ENCODE measurements at regions of chr14 and their contacts with region 1.

Region 1: DNA sequence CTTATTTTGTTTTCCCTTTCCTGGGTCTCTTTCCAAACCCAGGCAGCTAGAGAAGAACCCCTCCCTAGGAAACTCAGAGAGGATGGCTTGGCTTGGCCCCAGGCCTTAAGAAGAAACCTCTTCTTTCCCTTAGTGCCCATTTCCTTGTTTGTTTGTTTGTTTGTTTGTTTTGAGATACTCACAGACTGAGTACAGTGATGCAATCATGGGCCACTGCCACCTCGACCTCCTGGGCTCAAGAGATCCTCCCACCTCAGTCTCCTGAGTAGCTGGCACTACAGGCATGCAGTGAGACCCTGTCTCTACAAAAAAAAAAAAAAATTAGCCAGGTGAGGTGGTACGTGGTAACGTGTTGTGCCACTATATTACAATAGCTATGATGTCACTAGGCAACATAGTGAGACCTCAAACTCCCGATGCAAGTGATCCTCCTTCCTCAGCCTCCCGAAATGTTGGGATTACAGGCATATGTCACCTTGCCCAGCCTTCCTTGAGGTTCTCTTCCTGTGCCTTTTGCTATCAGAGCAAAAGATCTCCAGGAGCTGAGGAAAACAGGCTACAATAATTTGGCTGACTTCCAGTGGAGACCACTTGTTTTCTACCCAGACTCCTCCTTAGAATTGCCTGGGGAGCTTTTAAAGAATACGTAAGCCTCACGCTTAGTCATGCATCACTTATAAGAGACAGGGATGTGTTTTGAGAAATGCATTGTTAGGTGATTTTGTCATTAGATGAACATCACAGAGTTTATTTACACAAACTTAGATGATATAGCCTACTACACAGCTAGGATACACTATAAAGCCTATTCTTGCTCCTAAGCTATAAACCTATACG is 34.5 kb upstream of the LGALS3 start:
- DNase-seq: no peak
- H3K4me3 ChIP-seq: no peak overlapping the region
- H3K27ac ChIP-seq: no peak overlapping the region
- H3K4me1 ChIP-seq: peaks cover 0 to 17% of the 10 kb centered on the region in 2 donors
- H3K27me3 ChIP-seq: no peaks in the 10 kb centered on the region
- CTCF ChIP-seq: no peak
- POLR2A ChIP-seq: no peak

Region 2: GRCh38 chr14:55129428-55130195 is 35.1 kb after region 1 on chr14:
- intact Hi-C with region 1: loop called (anchors 5 kb)
- DNase-seq: peak; percentile 52 to 61
- H3K4me3 ChIP-seq: peak overlapping the region; percentile 3 to 83 (median 53)
- H3K27ac ChIP-seq: peak overlapping the region; percentile 67 to 93 (median 81)
- H3K4me1 ChIP-seq: peaks cover 3 to 15% of the 10 kb centered on the region in 2 donors
- H3K27me3 ChIP-seq: no peaks in the 10 kb centered on the region
- CTCF ChIP-seq: no peak
- POLR2A ChIP-seq: peak in 1 of 2 donors; percentile 13

Region 3: GRCh38 chr14:55157080-55157479 is 62.5 kb after region 1 on chr14:
- intact Hi-C with region 1: loop called (anchors 5 kb)
- DNase-seq: no peak
- H3K4me3 ChIP-seq: no peak overlapping the region
- H3K27ac ChIP-seq: no peak overlapping the region
- H3K4me1 ChIP-seq: no peaks in the 10 kb centered on the region
- H3K27me3 ChIP-seq: no peaks in the 10 kb centered on the region
- CTCF ChIP-seq: no peak
- POLR2A ChIP-seq: no peak